ENCODE measurements at regions of chr15 and their contacts with region 1.

Region 1: DNA sequence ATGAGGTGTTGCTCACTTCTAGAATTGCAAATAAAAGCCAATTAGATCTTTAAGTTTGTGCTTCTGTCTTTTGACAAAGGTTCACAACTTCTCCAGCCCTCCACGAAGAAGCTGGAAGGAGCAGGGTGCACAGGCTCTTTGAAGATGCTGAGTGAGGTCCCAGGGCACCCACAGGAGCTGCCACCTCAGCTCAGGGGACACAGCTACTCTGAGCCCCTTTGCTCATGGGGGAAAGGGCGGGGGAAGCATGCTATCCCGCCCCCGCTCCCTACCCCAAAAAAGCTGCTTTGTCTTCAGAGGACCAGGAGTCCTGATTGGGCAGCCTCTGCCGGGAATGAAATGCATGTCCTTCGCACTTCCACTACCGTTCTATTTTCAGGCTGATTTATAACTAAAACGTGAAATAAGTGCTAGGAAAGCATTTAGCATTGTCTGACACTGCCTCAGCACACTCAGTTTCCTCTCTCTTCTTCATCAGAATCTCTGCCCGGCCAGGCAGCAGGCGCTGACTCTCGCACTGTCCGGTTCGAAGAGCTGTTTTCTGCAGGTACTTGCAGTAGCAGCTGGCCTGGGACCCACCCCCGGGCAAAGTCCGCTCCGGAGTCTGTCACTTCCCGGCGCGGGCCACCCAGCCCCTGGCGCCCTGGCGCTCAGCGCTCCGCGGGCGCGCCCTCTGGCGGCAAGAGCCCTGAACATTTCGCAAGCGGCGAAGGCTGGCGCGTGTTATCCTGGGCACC is 45.5 kb upstream of the KLHL25 start:
- DNase-seq: peak; percentile 88
- CTCF ChIP-seq: peak; percentile 94

Region 2: DNA sequence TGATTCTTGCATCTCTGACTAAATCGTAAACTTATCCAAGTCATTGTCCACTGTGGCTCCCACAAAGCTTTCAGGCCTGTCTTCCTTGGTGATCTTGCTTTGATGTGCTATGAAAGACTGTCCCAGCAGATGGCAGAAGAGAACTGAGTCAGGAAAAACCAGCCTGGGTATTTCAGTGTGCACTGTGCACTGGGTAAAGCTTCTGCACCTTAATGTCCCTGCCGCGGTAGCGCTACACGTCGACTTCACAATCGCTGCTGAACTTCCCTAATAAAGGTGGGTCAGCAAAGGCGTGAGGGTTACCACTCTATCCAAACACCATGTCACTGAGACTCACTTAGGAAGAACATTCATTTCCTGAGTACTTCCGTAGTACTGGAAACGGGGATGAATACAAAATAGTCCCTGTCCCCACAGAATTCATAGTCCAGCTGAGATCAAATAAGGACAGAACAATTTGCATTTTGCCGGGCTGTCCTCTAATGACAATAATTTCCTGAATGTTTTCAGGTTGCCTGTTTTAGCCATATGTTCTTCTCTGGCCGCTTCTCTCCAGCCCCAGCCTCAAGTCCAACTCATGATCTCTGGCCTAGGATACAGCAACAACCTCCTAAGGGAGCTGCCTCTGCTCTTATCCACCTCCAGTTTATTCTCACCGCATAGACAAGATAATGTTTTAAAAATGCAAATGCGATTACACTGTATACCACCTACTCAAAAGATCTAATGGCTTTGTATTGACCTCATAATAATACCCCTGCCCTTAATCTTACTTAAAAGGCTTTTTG is 543.4 kb before region 1 on chr15:
- in situ Hi-C with region 1: loop called (anchors 25 kb)
- DNase-seq: peak; percentile 74
- CTCF ChIP-seq: peak; percentile 80

Region 3: DNA sequence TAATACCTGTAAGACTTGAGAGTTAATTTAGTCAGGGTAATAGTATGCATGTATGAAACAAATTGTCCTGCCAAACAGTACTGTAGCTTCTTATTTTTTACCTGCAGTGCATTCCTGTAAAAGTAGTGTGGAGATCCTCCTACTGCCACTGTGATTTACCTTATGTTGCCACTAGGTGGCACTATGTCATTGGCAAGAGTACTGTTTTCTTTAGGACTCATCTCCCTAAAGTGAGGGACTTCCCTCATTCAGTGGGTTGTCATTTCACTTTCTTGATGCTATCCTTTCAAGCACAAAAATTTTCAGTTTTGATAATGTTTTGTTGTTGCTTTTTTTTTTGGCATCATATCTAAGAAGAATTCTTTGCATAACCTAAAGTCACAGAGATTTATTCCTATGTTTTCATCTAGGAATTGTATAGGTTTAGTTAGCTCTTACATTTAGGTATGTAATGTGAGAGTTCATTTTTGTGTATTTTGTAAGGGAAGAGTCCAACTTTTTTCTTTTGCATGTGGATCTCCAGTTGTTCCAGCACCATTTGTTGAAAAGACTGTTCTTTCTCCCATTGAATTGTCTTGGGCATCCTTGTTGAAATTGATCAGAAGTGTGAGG is 354.2 kb before region 1 on chr15:
- in situ Hi-C with region 1: loop called (anchors 25 kb)
- DNase-seq: peak; percentile 72
- CTCF ChIP-seq: peak; percentile 79

Region 4: GRCh38 chr15:85618956-85619491 is 221.2 kb before region 1 on chr15:
- in situ Hi-C with region 1: loop called (anchors 25 kb)
- DNase-seq: peak; percentile 38
- CTCF ChIP-seq: no peak

Region 5: GRCh38 chr15:86044981-86045380 is 204.7 kb after region 1 on chr15:
- in situ Hi-C with region 1: no loop called
- DNase-seq: no peak
- CTCF ChIP-seq: no peak

Region 6: GRCh38 chr15:86213420-86214287 is 373.4 kb after region 1 on chr15:
- in situ Hi-C with region 1: no loop called
- DNase-seq: no peak
- CTCF ChIP-seq: peak; percentile 13

Measured in GM13977 (cell line).